Panc1 (cell line): ENCODE measurements at regions of chr16 and their contacts with region 1.

Region 1: DNA sequence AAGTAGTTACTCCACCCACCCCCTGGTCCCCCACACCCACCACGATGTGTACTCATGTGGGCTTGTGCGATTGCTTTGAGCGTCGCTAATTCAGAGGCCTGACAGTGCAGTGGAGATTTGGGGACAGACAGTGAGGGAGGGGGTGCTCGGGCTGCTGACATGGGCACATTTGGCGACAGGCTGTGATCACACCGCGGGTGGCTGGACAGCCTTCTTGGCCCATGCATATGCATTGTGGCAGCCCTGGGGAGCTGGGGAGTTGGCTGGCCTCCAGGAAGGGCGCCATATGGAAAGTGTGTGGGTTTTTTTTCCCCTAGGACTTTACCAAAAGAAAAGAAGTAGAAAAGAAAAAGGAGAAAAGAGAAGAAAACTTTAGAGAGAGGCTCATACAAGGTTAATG is 275.5 kb upstream of the N4BP1 start:
- DNase-seq: no peak
- ATAC-seq: no peak
- H3K4me3 ChIP-seq: no peak overlapping the region
- H3K27ac ChIP-seq: no peak overlapping the region
- H3K4me1 ChIP-seq: no peaks in the 10 kb centered on the region
- H3K27me3 ChIP-seq: no peaks in the 10 kb centered on the region
- CTCF ChIP-seq: no peak

Region 2: DNA sequence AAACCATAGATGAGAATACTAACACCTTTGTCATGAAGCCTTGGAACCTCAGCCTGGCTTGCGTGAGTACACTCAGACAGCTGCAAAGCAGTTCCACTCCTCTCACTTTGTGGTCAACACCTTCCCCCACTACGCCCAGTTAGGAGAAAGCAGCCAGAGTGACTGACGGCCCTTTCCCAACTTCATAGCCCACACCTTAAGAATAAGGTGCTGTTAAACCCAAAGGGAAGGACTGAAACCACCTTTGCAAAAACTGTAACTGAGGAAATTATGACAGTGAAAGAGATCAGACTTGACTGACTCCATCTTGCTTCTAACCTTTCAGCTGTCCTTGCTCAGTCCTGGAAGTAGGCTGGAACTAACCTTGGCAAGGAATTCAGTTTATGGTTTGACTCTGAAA is 289.1 kb before region 1 on chr16:
- CTCF ChIA-PET with region 1: no interaction called
- POLR2A ChIA-PET with region 1: interaction called, 16 read pairs
- in situ Hi-C with region 1: no loop called
- intact Hi-C with region 1: no loop called
- DNase-seq: no peak
- ATAC-seq: no peak
- H3K4me3 ChIP-seq: no peak overlapping the region
- H3K27ac ChIP-seq: no peak overlapping the region
- H3K4me1 ChIP-seq: no peaks in the 10 kb centered on the region
- H3K27me3 ChIP-seq: no peaks in the 10 kb centered on the region
- CTCF ChIP-seq: no peak